AG04449 (cell line): ENCODE measurements at regions of chr1 and their contacts with region 1.

Region 1: DNA sequence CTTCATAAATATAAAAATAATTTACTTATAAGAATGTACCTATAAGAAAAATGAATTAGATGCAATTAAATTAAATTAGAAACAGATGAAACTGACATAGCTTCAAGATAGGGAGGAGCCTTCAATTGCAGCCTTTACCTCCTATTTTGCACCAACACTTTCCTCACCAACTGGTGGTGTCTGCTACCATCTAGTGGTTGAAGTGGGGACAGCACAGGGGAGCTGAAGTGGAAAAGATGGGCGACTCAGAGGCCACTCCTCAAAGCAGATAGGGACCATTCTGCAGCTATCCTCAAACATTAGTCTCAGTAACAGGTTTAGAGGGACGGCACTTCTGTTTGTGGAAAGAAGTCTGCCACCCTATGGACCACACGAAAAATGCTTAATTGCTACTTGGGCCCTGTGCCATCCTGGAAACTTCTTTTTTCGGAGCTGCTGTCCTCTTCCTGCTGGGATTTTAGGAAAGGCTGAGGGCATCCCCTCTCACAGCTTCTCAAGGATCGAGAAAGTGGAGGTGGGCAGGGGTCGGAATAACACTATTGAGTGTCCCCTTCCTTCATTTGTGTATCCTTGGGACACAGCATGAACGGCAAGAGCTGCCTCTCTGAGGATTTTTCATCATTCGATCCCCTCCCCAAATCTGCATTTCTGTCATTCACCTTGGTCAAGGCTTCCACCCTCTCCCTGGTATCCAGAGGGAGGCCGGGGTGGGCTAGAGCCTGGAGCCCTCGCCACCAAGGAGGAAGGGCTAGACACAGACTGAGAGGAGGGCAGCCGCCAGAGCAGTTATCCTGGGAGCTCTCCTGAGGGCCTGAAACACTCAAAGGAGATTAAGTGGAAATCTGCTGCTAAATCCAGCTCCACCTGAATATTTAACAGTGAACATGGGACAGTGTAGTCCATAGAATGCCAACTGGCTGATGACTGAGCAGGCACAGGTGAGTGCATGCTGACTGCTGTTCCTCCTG is 9.6 kb downstream of the PROK1 start:
- DNase-seq: peak; percentile 24
- H3K4me3 ChIP-seq: no peak overlapping the region
- CTCF ChIP-seq: peak; percentile 84

Region 2: DNA sequence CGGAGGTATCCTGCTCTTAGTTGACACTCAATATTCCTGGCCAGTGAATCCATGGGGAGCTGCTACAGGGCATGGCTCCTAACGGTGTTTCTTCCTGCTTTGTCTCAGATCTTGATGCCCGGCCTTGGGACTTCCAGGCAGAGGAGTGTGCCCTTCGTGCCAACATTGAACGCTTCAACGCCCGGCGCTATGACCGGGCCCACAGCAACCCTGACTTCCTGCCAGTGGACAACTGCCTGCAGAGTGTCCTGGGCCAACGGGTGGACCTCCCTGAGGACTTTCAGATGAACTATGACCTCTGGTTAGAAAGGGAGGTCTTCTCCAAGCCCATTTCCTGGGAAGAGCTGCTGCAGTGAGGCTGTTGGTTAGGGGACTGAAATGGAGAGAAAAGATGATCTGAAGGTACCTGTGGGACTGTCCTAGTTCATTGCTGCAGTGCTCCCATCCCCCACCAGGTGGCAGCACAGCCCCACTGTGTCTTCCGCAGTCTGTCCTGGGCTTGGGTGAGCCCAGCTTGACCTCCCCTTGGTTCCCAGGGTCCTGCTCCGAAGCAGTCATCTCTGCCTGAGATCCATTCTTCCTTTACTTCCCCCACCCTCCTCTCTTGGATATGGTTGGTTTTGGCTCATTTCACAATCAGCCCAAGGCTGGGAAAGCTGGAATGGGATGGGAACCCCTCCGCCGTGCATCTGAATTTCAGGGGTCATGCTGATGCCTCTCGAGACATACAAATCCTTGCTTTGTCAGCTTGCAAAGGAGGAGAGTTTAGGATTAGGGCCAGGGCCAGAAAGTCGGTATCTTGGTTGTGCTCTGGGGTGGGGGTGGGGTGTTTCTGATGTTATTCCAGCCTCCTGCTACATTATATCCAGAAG is 406.7 kb before region 1 on chr1:
- CTCF ChIA-PET with region 1: interaction called, 31 read pairs
- POLR2A ChIA-PET with region 1: no interaction called
- DNase-seq: no peak
- H3K4me3 ChIP-seq: no peak overlapping the region
- CTCF ChIP-seq: peak; percentile 93

Region 3: DNA sequence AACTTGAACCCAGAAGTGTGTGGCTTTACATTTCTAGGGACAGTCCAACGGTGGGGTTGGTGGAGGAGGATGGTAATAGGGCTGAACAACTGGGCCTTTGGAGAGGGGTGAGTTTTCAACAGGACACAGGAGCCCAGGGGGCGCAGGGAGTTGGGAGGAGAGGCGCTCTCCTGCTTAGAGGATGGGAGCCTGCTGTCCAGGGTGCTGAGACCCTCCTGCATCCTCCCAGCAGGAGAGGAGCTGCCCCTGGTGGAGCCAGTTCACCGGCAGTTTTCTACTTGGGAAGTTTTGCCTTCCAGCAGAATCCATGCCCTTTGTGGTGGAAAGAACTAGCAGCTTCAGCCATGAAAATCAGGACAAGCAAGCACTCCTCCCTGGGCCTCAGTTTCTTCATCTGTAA is 241.8 kb before region 1 on chr1:
- CTCF ChIA-PET with region 1: interaction called, 12 read pairs
- POLR2A ChIA-PET with region 1: no interaction called
- DNase-seq: no peak
- H3K4me3 ChIP-seq: no peak overlapping the region
- CTCF ChIP-seq: peak; percentile 11

Region 4: GRCh38 chr1:110328274-110328673 is 132.3 kb before region 1 on chr1:
- CTCF ChIA-PET with region 1: interaction called, 12 read pairs
- POLR2A ChIA-PET with region 1: no interaction called
- DNase-seq: no peak
- H3K4me3 ChIP-seq: no peak overlapping the region
- CTCF ChIP-seq: no peak

Region 5: DNA sequence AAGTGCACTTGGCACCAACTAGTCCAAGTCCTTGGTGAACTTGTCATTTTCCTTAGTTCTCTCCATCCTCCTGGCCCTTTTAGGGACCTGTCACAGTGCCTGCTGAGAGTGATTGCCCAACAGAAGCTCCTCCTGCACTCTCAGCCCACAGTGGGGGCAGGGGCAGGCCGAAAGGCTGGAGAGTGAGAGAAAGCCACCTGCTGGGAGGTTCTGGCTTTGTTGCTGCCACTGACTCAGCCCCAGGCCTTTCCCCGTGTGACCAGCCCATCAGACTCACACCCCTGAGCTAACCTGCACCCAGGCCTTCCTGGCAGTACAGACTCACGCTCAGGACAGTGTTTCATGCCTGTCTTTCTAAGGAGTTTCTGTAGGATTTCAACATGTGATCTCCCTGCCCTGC is 26.7 kb before region 1 on chr1:
- CTCF ChIA-PET with region 1: interaction called, 17 read pairs
- POLR2A ChIA-PET with region 1: no interaction called
- DNase-seq: no peak
- H3K4me3 ChIP-seq: no peak overlapping the region
- CTCF ChIP-seq: no peak

Region 6: GRCh38 chr1:110471163-110471562 is 10.6 kb after region 1 on chr1:
- CTCF ChIA-PET with region 1: interaction called, 12 read pairs
- POLR2A ChIA-PET with region 1: no interaction called
- DNase-seq: no peak
- H3K4me3 ChIP-seq: no peak overlapping the region
- CTCF ChIP-seq: no peak

Region 7: DNA sequence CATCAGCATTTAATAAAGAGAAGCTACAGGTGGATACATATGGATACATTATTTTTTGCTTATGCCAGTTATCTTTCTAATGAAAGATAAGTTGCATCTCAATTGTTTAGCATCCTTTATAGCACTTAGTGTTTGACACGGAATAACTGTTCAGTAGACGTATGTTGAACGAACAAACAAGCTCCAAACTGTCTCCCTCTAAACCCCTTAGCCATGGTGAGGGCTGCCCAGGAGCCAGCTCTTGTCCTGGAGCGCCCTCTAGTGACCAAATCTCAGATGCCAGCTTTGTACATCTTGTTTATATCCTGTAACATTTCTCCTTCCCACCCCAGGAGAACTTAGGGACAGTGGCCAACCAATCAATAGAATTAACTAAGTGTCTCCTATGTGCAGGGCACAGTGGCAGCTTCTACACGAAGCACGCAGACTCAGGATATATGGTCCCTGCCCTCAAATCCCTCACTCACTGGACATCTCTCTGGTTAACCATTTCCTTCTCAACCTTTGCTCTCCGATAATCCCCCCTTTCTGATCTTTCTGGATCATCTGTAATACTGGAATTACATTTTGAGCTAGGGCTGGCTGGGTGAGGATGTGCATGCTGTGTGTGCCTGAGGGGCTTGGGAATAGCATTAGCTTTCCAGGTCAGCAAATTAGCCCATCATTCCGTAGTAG is 35.5 kb after region 1 on chr1:
- CTCF ChIA-PET with region 1: interaction called, 119 read pairs
- POLR2A ChIA-PET with region 1: no interaction called
- DNase-seq: peak; percentile 28
- H3K4me3 ChIP-seq: no peak overlapping the region
- CTCF ChIP-seq: peak; percentile 78